ENCODE measurements at regions of chr4 and their contacts with region 1.

Region 1: GRCh38 chr4:84750253-84750959 is 167.5 kb downstream of the CDS1 start:
- DNase-seq: peak; percentile 36 to 55 (median 50)
- H3K4me3 ChIP-seq: no peak overlapping the region
- H3K27ac ChIP-seq: no peak overlapping the region
- H3K4me1 ChIP-seq: peaks cover 0 to 12% (median 6%) of the 10 kb centered on the region in 4 experiments
- H3K27me3 ChIP-seq: no peaks in the 10 kb centered on the region

Region 2: GRCh38 chr4:83548151-83548905 is 1202.1 kb before region 1 on chr4:
- CTCF ChIA-PET with region 1: no interaction called
- POLR2A ChIA-PET with region 1: no interaction called
- DNase-seq: peak; percentile 96 to 100 (median 100)
- H3K4me3 ChIP-seq: peak overlapping the region in 2 of 7 experiments; percentile 8 to 23
- H3K27ac ChIP-seq: peak overlapping the region; percentile 50 to 72
- H3K4me1 ChIP-seq: peaks cover 10 to 35% (median 29%) of the 10 kb centered on the region in 4 experiments
- H3K27me3 ChIP-seq: no peaks in the 10 kb centered on the region

Region 3: DNA sequence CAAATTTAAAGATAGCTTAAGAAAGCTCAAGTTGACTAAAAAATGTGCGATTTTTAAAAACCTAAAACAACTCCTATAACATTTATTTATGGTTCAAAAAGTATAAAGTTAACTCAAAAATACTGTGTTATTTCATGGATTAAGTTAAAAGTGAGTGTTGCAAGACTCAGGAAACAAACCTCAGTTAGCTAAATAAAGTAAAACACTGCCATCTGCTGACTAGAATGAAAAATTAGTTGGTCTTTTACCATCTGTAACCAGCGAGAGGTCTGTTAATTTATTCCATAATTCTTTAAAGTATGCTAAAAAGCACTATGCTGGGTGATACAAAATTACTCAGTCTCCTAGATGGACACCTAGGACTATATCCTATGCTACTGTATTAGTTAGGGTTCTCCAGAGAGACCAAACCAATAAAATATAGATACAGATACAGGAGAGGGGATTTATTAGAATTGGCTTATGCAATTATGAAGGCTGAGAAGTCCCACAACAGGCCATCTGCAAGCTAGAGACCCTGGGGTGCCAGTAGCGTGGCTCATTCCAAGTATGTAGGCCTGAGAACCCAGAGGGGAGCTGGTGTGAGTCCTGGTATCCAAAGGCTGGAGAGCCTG is 221.0 kb after region 1 on chr4:
- CTCF ChIA-PET with region 1: interaction called, 36 read pairs
- POLR2A ChIA-PET with region 1: no interaction called
- DNase-seq: peak; percentile 47 to 71 (median 66)
- H3K4me3 ChIP-seq: no peak overlapping the region
- H3K27ac ChIP-seq: no peak overlapping the region
- H3K4me1 ChIP-seq: peaks cover 5 to 10% (median 10%) of the 10 kb centered on the region in 4 experiments
- H3K27me3 ChIP-seq: peaks cover 4 to 24% (median 6%) of the 10 kb centered on the region in 5 experiments